ENCODE measurements at regions of chr1 and their contacts with region 1.

Region 1: GRCh38 chr1:112706908-112707663 is at the start of gene RHOC:
- DNase-seq: no peak
- ATAC-seq: peak; percentile 83
- H3K4me3 ChIP-seq: peak within 1 kb of the TSS; percentile 91
- H3K27ac ChIP-seq: peak within 1 kb of the TSS; percentile 81
- H3K4me1 ChIP-seq: peaks cover 16% of the 10 kb centered on the region
- H3K27me3 ChIP-seq: no peaks in the 10 kb centered on the region
- CTCF ChIP-seq: peak; percentile 84 to 98 (median 97)
- EP300 ChIP-seq: no peak
- POLR2A ChIP-seq: peak; percentile 78
- RAD21 ChIP-seq: peak; percentile 85
- polyA plus RNA-seq, gene RHOC: 20.6 to 37.9 TPM

Region 2: DNA sequence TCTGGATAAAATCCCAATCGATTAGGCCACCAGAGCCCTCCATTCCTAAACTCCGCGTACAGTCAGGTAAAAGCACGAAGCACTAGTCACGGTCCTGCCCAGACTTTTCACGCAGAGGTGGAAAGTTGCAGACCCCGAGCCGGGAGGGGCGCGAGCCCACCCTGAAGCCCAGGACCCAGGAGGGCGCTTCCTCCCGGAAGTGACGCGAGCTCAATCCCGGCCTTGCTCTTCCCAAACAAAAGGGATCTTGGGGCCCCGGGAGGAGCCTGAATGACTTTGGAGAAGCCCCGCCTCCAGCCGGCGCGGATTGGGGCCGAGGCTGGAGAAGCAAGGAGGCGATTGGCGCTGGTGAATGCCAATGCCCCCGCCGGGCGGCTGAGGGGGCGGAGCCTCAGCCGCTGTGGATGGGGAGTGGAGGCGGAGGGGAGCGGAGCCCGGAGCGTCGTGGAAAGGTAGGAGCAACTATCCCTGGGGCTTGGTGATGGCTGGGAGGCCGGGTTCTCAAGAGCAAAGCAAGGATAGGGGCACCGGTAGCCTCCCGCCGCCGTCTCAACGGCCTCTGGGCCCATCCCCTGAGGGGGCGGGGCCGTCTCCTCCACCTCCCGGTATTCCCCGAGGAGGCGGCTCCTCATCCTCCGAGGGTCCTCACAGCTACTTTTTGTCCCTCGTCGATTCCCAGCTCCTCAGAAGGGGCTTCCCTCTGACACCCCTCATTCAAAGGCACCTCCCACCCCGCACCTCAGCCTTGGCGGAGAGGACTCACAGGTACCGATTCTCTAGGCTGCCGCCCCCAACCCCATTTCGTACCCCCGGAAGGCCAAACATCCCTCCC is 311.0 kb before region 1 on chr1 and contains the start of gene CTTNBP2NL:
- CTCF ChIA-PET with region 1: interaction called, 122 read pairs
- POLR2A ChIA-PET with region 1: interaction called, 6 read pairs
- RAD21 ChIA-PET with region 1: interaction called, 53 read pairs
- SMC1A ChIA-PET with region 1: interaction called, 47 read pairs
- in situ Hi-C with region 1: loop called (anchors 5 kb)
- intact Hi-C with region 1: loop called (anchors 1 kb)
- DNase-seq: no peak
- ATAC-seq: peak; percentile 85
- H3K4me3 ChIP-seq: peak within 1 kb of the TSS; percentile 97
- H3K27ac ChIP-seq: peak within 1 kb of the TSS; percentile 78
- H3K4me1 ChIP-seq: peaks cover 18% of the 10 kb centered on the region
- H3K27me3 ChIP-seq: no peaks in the 10 kb centered on the region
- CTCF ChIP-seq: no peak
- EP300 ChIP-seq: no peak
- POLR2A ChIP-seq: peak; percentile 28; the same call in 1 of the 2 replicates
- RAD21 ChIP-seq: no peak
- polyA plus RNA-seq, gene CTTNBP2NL: 2.1 to 5.7 TPM

Region 3: DNA sequence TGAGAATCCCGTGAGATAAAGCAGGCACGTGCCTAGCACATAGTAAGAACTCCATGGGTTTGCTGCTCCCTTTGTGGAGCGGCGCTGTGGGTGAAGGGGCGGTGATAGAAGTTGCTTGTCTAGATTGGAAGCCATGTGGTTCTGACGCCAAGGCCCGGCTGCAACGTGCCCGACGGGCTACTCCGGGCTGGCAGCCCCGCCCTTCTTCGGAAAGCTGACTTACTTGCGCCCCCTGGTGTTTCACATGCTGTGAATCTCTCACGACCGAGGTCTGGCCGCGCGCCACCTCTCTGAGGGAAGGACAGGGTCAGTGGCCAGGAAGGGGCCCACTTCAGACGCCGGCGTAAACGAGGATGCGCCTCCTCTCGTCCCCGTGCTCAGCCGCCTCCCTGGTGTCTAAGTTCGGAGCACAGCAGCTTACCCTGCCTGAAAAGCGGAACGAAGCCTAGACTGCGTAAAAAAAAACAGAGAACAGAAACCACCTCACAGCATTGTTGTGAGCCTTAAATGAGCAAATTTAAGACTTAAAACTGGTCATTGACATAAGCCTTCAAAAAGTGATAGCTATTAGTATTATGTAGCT is 240.9 kb before region 1 on chr1:
- CTCF ChIA-PET with region 1: interaction called, 8 read pairs
- POLR2A ChIA-PET with region 1: interaction called, 3 read pairs
- RAD21 ChIA-PET with region 1: interaction called, 14 read pairs
- SMC1A ChIA-PET with region 1: interaction called, 11 read pairs
- in situ Hi-C with region 1: no loop called
- intact Hi-C with region 1: loop called (anchors 1 kb)
- DNase-seq: peak; percentile 95
- ATAC-seq: peak; percentile 99
- H3K4me3 ChIP-seq: no peak overlapping the region
- H3K27ac ChIP-seq: peak overlapping the region; percentile 14
- H3K4me1 ChIP-seq: peaks cover 15% of the 10 kb centered on the region
- H3K27me3 ChIP-seq: no peaks in the 10 kb centered on the region
- CTCF ChIP-seq: peak; percentile 77 to 91 (median 81); a peak in 5 of 6 replicates
- EP300 ChIP-seq: peak; percentile 85 to 94; a peak in 3 of 4 replicates
- POLR2A ChIP-seq: peak; percentile 61
- RAD21 ChIP-seq: peak; percentile 72

Region 4: GRCh38 chr1:112501810-112502641 is 205.1 kb before region 1 on chr1:
- CTCF ChIA-PET with region 1: interaction called, 43 read pairs
- POLR2A ChIA-PET with region 1: interaction called, 6 read pairs
- RAD21 ChIA-PET with region 1: interaction called, 11 read pairs
- SMC1A ChIA-PET with region 1: interaction called, 26 read pairs
- in situ Hi-C with region 1: loop called (anchors 5 kb)
- intact Hi-C with region 1: loop called (anchors 1 kb)
- DNase-seq: no peak
- ATAC-seq: peak; percentile 78
- H3K4me3 ChIP-seq: peak overlapping the region; percentile 50; the same call in 1 of the 2 replicates
- H3K27ac ChIP-seq: no peak overlapping the region
- H3K4me1 ChIP-seq: no peaks in the 10 kb centered on the region
- H3K27me3 ChIP-seq: peaks cover 3 to 5% of the 10 kb centered on the region in 2 experiments; a peak in 2 of 4 replicates
- CTCF ChIP-seq: peak; percentile 73 to 89 (median 77)
- EP300 ChIP-seq: no peak
- POLR2A ChIP-seq: no peak
- RAD21 ChIP-seq: peak; percentile 63

Region 5: GRCh38 chr1:112614460-112615065 is 92.5 kb before region 1 on chr1:
- CTCF ChIA-PET with region 1: interaction called, 21 read pairs
- POLR2A ChIA-PET with region 1: interaction called, 26 read pairs
- RAD21 ChIA-PET with region 1: interaction called, 9 read pairs
- SMC1A ChIA-PET with region 1: interaction called, 21 read pairs
- in situ Hi-C with region 1: no loop called
- intact Hi-C with region 1: loop called (anchors 2 kb)
- DNase-seq: no peak
- ATAC-seq: peak; percentile 10; the same call in 1 of the 3 replicates
- H3K4me3 ChIP-seq: no peak overlapping the region
- H3K27ac ChIP-seq: no peak overlapping the region
- H3K4me1 ChIP-seq: peaks cover 4% of the 10 kb centered on the region
- H3K27me3 ChIP-seq: no peaks in the 10 kb centered on the region
- CTCF ChIP-seq: peak; percentile 49 to 63 (median 56)
- EP300 ChIP-seq: no peak
- POLR2A ChIP-seq: no peak
- RAD21 ChIP-seq: peak; percentile 78

Region 6: GRCh38 chr1:112619520-112620376 is 87.3 kb before region 1 on chr1 and contains the start of gene CAPZA1:
- CTCF ChIA-PET with region 1: interaction called, 21 read pairs
- POLR2A ChIA-PET with region 1: interaction called, 26 read pairs
- RAD21 ChIA-PET with region 1: interaction called, 9 read pairs
- SMC1A ChIA-PET with region 1: interaction called, 21 read pairs
- in situ Hi-C with region 1: no loop called
- intact Hi-C with region 1: loop called (anchors 1 kb)
- DNase-seq: peak; percentile 62
- ATAC-seq: peak; percentile 85
- H3K4me3 ChIP-seq: peak within 1 kb of the TSS; percentile 77
- H3K27ac ChIP-seq: peak within 1 kb of the TSS; percentile 100
- H3K4me1 ChIP-seq: peaks cover 4% of the 10 kb centered on the region
- H3K27me3 ChIP-seq: no peaks in the 10 kb centered on the region
- CTCF ChIP-seq: no peak
- EP300 ChIP-seq: peak in 1 of 2 experiments; percentile 32; a peak in 1 of 4 replicates
- POLR2A ChIP-seq: peak; percentile 93
- RAD21 ChIP-seq: no peak
- polyA plus RNA-seq, gene CAPZA1: 401 to 886 TPM

Region 7: GRCh38 chr1:112674439-112674985 is 32.6 kb before region 1 on chr1 and contains the start of gene MOV10:
- CTCF ChIA-PET with region 1: interaction called, 33 read pairs
- POLR2A ChIA-PET with region 1: interaction called, 21 read pairs
- RAD21 ChIA-PET with region 1: interaction called, 42 read pairs
- SMC1A ChIA-PET with region 1: interaction called, 28 read pairs
- in situ Hi-C with region 1: no loop called
- intact Hi-C with region 1: loop called (anchors 1 kb)
- DNase-seq: peak; percentile 40
- ATAC-seq: peak; percentile 81
- H3K4me3 ChIP-seq: peak within 1 kb of the TSS; percentile 86
- H3K27ac ChIP-seq: peak within 1 kb of the TSS; percentile 81
- H3K4me1 ChIP-seq: peaks cover 9% of the 10 kb centered on the region
- H3K27me3 ChIP-seq: no peaks in the 10 kb centered on the region
- CTCF ChIP-seq: no peak
- EP300 ChIP-seq: 0 out of 4 replicates have a peak, but pooled peaks of 1 of the 2 experiments have one; percentile 16
- POLR2A ChIP-seq: peak; percentile 74
- RAD21 ChIP-seq: no peak
- polyA plus RNA-seq, gene MOV10: 21.0 to 28.6 TPM

Measured in GM12878 (cell line).